Cardiac septum (tissue), 1 donor: ENCODE measurements at regions of chr20 and their contacts with region 1.

Region 1: DNA sequence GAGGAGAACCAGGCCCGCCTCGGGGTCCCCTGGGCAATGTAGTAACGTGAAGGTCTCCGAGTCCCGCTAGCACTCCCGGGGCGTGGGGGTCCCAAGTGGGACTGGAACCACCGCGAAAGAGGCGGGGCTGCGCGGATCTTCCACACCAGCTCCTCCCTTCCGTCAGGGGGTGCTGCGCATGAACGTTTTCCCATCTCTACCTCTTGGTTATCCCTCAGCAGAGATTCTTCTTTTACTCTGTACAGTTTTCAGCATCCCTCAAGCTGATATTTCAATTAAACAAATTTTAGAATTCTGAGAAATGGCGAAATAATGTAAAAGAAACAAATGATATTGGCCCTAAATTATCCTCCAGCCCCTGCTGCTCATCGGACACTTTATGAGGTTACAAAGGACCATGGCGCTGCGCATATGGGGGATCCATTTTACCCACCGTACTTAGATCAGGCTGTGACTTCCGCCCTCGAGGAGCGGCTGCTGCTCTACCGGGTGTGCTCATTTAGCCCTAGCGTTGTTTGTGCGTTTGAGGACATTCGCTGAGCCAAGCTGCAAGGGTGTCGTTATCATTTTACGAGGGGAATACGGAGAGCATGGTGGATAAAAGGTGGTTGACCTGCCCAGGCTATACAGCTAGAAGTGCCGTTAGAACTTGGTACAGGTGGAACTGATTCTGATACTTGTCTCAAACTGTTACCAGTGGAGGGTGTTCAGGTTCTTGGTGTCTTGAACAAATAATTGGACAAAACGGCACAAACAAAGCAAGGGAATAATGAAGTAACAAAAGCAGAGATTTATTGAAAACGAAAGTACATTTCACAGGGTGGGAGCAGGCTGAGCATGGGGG is 75.2 kb upstream of the CHD6 start:
- DNase-seq: peak; percentile 84

Region 2: GRCh38 chr20:41136680-41137613 is 556.4 kb before region 1 on chr20 and contains the start of gene PLCG1:
- intact Hi-C with region 1: loop called (anchors 10 kb)
- DNase-seq: peak; percentile 94
- total RNA-seq, gene PLCG1: 66.6 TPM

Region 3: GRCh38 chr20:41339507-41340326 is 353.6 kb before region 1 on chr20:
- intact Hi-C with region 1: loop called (anchors 10 kb)
- DNase-seq: peak; percentile 89

Region 4: DNA sequence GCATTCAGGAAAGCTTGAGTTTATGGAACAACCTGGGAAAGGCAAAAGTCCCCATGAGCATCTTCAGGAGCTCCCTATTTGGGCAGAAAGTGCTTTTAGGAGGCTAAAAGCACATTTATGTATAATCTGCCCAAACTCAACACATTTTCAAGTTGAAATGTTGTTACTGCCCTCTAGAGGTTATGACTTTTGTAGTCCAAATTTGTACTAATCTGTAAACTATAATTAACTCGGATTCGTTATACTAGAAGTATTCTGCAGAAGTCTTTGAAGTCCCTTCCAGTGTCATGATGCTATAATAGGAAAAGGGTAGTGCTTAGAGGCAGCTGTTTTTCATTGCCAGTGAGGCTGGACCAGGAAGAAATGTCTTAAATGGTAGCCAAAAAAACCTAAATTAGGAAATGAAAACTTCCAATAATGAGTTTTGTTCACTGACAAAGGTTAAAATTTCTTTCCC is 281.9 kb before region 1 on chr20:
- intact Hi-C with region 1: loop called (anchors 5 kb)
- DNase-seq: no peak

Region 5: DNA sequence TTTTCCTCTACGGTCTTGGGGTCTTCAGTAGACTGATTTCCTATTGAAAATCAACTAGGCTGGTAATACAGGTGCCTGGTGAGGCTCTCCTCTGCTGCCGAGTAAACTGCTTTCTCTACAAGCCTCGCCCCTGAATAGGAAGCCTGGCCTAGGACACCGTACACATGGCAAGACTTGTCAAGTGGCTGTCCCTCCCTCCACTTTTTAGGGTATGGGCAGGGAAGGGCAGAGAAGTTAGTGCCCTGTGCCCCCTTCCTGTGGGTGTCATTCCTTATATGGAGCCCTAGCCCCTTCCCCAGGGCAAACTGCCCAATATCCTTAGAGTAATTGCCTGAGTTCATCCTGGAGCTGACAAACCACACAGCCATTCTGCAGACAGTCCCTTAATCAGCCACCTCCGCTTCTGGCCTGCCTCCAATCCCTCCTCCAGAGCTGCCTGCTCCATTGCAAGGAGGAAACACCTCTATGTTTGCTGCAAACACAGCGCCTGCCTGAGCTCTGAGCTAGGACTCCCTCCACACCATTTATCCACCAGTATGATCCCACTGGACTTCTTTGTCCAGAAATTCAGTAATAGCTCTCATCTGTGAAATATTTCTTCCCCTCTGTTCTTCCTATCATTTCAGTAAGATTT is 168.3 kb before region 1 on chr20:
- intact Hi-C with region 1: loop called (anchors 10 kb)
- DNase-seq: peak; percentile 85

Region 6: GRCh38 chr20:41617931-41618806 is 75.2 kb before region 1 on chr20 and contains the start of gene CHD6:
- intact Hi-C with region 1: loop called (anchors 5 kb)
- DNase-seq: peak; percentile 99
- total RNA-seq, gene CHD6: 35.9 TPM